ENCODE measurements at regions of chr4 and their contacts with region 1.

Region 1: GRCh38 chr4:74311696-74312313 is 3.5 kb downstream of the EPGN start:
- DNase-seq: peak; percentile 56
- H3K4me3 ChIP-seq: no peak overlapping the region
- H3K27ac ChIP-seq: no peak overlapping the region
- H3K4me1 ChIP-seq: peaks cover 22% of the 10 kb centered on the region
- H3K27me3 ChIP-seq: no peaks in the 10 kb centered on the region
- CTCF ChIP-seq: peak; percentile 57 to 71

Region 2: GRCh38 chr4:74189331-74190043 is 122.3 kb before region 1 on chr4:
- CTCF ChIA-PET with region 1: interaction called, 3 read pairs
- dilution Hi-C with region 1: no loop called
- in situ Hi-C with region 1: loop called in 1 of 2 experiments (anchors 10 kb)
- intact Hi-C with region 1: loop called (anchors 1 kb)
- DNase-seq: peak; percentile 44
- H3K4me3 ChIP-seq: no peak overlapping the region
- H3K27ac ChIP-seq: no peak overlapping the region
- H3K4me1 ChIP-seq: no peaks in the 10 kb centered on the region
- H3K27me3 ChIP-seq: no peaks in the 10 kb centered on the region
- CTCF ChIP-seq: peak; percentile 71 to 73

Region 3: DNA sequence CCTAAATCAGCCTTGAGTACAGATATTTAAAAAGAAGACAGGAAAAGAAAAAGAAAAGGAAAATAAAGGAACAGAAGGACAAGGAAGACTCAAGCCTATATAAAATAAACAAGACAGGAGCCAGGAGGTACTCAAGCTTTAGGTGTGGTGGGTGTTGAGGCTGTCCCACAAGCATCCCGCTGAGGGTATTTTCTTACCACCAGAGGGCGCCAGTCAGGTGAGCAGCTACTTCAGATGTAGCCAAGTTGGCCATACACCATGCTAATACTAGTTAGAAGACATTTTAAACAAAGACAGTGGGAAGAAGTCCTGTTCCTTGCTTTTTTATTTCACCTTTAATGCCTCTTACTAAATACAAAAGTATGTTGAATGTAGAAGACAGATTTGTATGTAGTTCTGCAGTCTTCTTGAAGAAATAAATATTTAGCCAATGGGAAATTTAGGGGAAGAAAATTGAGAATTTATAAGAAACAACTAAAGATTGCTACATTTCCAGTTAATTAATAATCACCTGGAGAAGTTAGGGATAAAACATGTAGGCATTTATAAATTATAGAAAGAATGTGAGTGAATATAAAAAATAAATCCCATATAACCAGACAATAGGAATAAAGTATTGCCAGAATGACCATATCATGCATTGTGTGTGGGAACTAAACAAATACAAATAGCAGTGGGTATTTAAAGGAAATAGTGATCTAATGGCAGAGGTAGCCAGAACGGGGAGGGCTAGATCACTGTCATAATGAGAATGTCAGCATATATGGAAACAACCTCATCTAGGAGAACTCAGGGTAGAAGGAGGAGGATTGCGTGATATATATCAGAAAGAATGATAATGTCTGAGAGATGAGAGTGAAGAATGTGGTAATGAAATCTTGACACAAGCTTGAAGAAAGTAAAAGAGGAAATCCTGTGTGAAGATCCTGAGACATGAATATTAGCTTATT is 82.8 kb before region 1 on chr4:
- CTCF ChIA-PET with region 1: interaction called, 10 read pairs
- dilution Hi-C with region 1: loop called (anchors 5 kb)
- in situ Hi-C with region 1: loop called in 1 of 2 experiments (anchors 10 kb)
- intact Hi-C with region 1: loop called (anchors 1 kb)
- DNase-seq: peak; percentile 68
- H3K4me3 ChIP-seq: no peak overlapping the region
- H3K27ac ChIP-seq: no peak overlapping the region
- H3K4me1 ChIP-seq: peaks cover 15% of the 10 kb centered on the region
- H3K27me3 ChIP-seq: no peaks in the 10 kb centered on the region
- CTCF ChIP-seq: peak; percentile 84 to 88

Region 4: GRCh38 chr4:74235135-74235534 is 76.7 kb before region 1 on chr4:
- CTCF ChIA-PET with region 1: no interaction called
- dilution Hi-C with region 1: no loop called
- in situ Hi-C with region 1: loop called in 1 of 2 experiments (anchors 5 kb)
- intact Hi-C with region 1: no loop called
- DNase-seq: no peak
- H3K4me3 ChIP-seq: no peak overlapping the region
- H3K27ac ChIP-seq: no peak overlapping the region
- H3K4me1 ChIP-seq: peaks cover 11% of the 10 kb centered on the region
- H3K27me3 ChIP-seq: no peaks in the 10 kb centered on the region
- CTCF ChIP-seq: no peak

Region 5: GRCh38 chr4:74267998-74268606 is 43.7 kb before region 1 on chr4:
- CTCF ChIA-PET with region 1: no interaction called
- dilution Hi-C with region 1: no loop called
- in situ Hi-C with region 1: no loop called
- intact Hi-C with region 1: loop called (anchors 1 kb)
- DNase-seq: peak; percentile 83
- H3K4me3 ChIP-seq: no peak overlapping the region
- H3K27ac ChIP-seq: peak overlapping the region; percentile 68
- H3K4me1 ChIP-seq: peaks cover 22% of the 10 kb centered on the region
- H3K27me3 ChIP-seq: no peaks in the 10 kb centered on the region
- CTCF ChIP-seq: no peak

Region 6: DNA sequence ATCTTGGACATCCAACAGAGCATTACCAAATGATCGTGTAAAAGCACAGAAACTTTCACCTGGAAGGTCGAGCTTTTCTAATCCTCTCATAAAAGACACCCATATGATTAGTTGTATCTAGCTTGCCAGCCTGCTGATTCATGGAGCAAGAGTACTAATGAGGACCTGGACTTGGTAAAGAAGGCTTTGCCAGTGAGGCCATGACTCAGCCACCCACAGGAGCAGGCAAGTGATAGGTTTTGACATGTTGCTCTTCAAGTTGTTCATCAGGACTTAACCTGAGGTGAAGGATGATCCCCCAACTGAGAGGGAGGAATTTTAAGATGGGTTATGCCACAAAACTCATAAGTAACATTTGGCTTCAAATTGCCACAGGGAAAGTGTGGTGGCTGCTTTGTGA is 28.2 kb before region 1 on chr4:
- CTCF ChIA-PET with region 1: no interaction called
- dilution Hi-C with region 1: no loop called
- in situ Hi-C with region 1: no loop called
- intact Hi-C with region 1: loop called (anchors 1 kb)
- DNase-seq: peak; percentile 97
- H3K4me3 ChIP-seq: peak overlapping the region in 2 of 3 experiments; percentile 28 to 30
- H3K27ac ChIP-seq: peak overlapping the region; percentile 81
- H3K4me1 ChIP-seq: peaks cover 24% of the 10 kb centered on the region
- H3K27me3 ChIP-seq: no peaks in the 10 kb centered on the region
- CTCF ChIP-seq: no peak

Region 7: GRCh38 chr4:74793757-74794340 is 482.0 kb after region 1 on chr4:
- CTCF ChIA-PET with region 1: interaction called, 12 read pairs
- dilution Hi-C with region 1: no loop called
- in situ Hi-C with region 1: no loop called
- intact Hi-C with region 1: no loop called
- DNase-seq: peak; percentile 44
- H3K4me3 ChIP-seq: peak overlapping the region; percentile 68 to 84 (median 71)
- H3K27ac ChIP-seq: peak overlapping the region; percentile 37
- H3K4me1 ChIP-seq: peaks cover 12% of the 10 kb centered on the region
- H3K27me3 ChIP-seq: no peaks in the 10 kb centered on the region
- CTCF ChIP-seq: peak; percentile 24 to 59

Measured in mammary epithelial cell (primary cell).